ENCODE measurements at regions of chr20 and their contacts with region 1.

Region 1: GRCh38 chr20:10686356-10687133 is 12.7 kb upstream of the JAG1 start:
- DNase-seq: no peak
- ATAC-seq: no peak
- H3K4me3 ChIP-seq: no peak overlapping the region
- H3K27ac ChIP-seq: no peak overlapping the region
- H3K4me1 ChIP-seq: peaks cover 9% of the 10 kb centered on the region
- H3K27me3 ChIP-seq: no peaks in the 10 kb centered on the region
- CTCF ChIP-seq: no peak
- POLR2A ChIP-seq: no peak

Region 2: GRCh38 chr20:10611357-10611756 is 75.2 kb before region 1 on chr20:
- intact Hi-C with region 1: no loop called
- DNase-seq: peak; percentile 48 to 75 (median 60)
- ATAC-seq: peak; percentile 69
- H3K4me3 ChIP-seq: no peak overlapping the region
- H3K27ac ChIP-seq: no peak overlapping the region
- H3K4me1 ChIP-seq: no peaks in the 10 kb centered on the region
- H3K27me3 ChIP-seq: no peaks in the 10 kb centered on the region
- CTCF ChIP-seq: peak; percentile 12 to 65 (median 51)
- POLR2A ChIP-seq: no peak

Region 3: GRCh38 chr20:11168026-11168425 is 481.5 kb after region 1 on chr20:
- intact Hi-C with region 1: no loop called
- DNase-seq: no peak
- ATAC-seq: no peak
- H3K4me3 ChIP-seq: no peak overlapping the region
- H3K27ac ChIP-seq: no peak overlapping the region
- H3K4me1 ChIP-seq: no peaks in the 10 kb centered on the region
- H3K27me3 ChIP-seq: no peaks in the 10 kb centered on the region
- CTCF ChIP-seq: no peak
- POLR2A ChIP-seq: no peak

Region 4: DNA sequence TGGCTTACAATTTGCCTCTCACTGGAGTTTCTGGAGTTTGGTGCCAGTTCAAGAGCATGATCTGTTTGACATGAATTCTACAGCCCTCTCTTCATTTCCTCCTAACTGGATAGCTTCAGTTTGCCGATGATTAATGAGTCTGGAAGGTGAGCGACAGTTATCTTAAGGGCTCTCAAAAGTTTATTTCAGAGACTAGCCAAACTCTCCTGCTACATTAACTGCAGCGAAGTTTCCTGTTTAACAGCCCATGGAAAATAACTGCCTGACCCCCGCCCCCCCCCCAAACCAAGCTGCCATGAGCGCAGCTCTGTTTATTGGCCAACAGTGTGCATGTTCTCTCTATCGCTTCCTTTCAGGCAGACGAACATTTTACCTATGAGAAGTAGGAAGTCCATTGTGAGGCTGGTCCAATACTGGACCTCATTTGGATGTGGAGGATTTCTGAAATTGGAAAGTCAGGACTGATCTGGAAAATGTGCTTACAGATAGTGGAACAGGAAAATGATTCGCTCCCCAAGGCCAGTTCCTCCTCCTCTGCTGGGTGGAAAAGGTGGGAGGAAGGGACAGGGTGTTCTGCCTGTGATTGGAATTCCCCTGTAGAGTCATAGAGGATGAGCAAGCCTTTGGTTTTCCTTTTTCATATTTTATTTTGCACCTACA is 509.5 kb after region 1 on chr20:
- intact Hi-C with region 1: loop called (anchors 10 kb)
- DNase-seq: peak in 1 of 4 donors; percentile 20
- ATAC-seq: peak; percentile 59
- H3K4me3 ChIP-seq: no peak overlapping the region
- H3K27ac ChIP-seq: peak overlapping the region in 2 of 4 donors; percentile 30 to 50
- H3K4me1 ChIP-seq: no peaks in the 10 kb centered on the region
- H3K27me3 ChIP-seq: no peaks in the 10 kb centered on the region
- CTCF ChIP-seq: no peak
- POLR2A ChIP-seq: no peak